ENCODE measurements at regions of chr5 and their contacts with region 1.

Region 1: DNA sequence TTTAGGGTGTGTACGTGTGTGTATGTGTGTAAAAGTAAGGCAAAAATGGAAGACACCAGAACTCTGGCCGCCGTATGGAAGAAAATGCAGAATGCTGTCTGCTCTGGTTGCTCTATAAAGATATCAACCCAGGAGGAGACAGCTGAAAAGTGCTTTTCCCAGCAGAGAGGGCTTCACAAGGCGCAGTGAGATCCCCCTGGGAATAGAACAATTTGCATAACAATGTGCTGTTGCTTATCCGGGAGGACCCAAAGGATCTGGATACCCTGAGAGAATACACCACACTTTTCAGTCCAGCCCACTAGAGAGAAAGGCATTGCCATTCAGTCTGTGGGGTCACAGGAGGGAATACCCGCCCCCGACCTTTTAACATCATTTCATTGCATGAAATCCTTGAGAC is 230.6 kb downstream of the EBF1 start:
- DNase-seq: no peak
- ATAC-seq: no peak
- H3K4me3 ChIP-seq: no peak overlapping the region
- H3K4me3 Mint-ChIP-seq: peak overlapping the region; percentile 0
- H3K27ac ChIP-seq: no peak overlapping the region
- H3K27ac Mint-ChIP-seq: no peak overlapping the region
- H3K4me1 ChIP-seq: peaks cover 38 to 39% of the 10 kb centered on the region in 2 donors
- H3K4me1 Mint-ChIP-seq: peaks cover 77% of the 10 kb centered on the region
- H3K27me3 ChIP-seq: no peaks in the 10 kb centered on the region
- H3K27me3 Mint-ChIP-seq: no peaks in the 10 kb centered on the region
- CTCF ChIP-seq: no peak

Region 2: DNA sequence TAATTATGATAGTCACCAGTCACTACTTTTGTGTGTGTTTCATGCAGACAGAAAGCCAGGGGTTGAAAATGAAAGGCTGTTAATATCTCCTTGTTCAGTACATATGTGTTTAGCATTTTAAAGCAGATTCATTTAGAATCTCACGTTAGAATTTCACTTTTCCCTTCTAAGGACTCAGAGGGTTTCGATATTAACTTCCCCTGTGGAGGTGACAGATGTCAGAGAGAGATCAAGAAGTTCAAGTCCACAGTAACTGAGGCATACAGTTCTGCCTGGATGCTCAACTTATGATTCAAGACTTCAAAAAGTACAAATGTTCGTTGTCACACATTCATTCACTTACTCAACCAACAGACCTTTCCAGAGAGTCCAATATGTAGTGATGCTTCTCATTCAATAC is 20.5 kb before region 1 on chr5:
- CTCF ChIA-PET with region 1: interaction called, 5 read pairs
- POLR2A ChIA-PET with region 1: interaction called, 10 read pairs
- intact Hi-C with region 1: no loop called
- DNase-seq: peak; percentile 58
- ATAC-seq: peak; percentile 40
- H3K4me3 ChIP-seq: peak overlapping the region in 2 of 5 experiments; percentile 1 to 21
- H3K4me3 Mint-ChIP-seq: peak overlapping the region; percentile 63
- H3K27ac ChIP-seq: peak overlapping the region; percentile 43 to 76
- H3K27ac Mint-ChIP-seq: peak overlapping the region; percentile 37
- H3K4me1 ChIP-seq: peaks cover 74 to 75% of the 10 kb centered on the region in 2 donors
- H3K4me1 Mint-ChIP-seq: peaks cover 85% of the 10 kb centered on the region
- H3K27me3 ChIP-seq: no peaks in the 10 kb centered on the region
- H3K27me3 Mint-ChIP-seq: no peaks in the 10 kb centered on the region
- CTCF ChIP-seq: no peak